ENCODE measurements at regions of chr14 and their contacts with region 1.

Region 1: DNA sequence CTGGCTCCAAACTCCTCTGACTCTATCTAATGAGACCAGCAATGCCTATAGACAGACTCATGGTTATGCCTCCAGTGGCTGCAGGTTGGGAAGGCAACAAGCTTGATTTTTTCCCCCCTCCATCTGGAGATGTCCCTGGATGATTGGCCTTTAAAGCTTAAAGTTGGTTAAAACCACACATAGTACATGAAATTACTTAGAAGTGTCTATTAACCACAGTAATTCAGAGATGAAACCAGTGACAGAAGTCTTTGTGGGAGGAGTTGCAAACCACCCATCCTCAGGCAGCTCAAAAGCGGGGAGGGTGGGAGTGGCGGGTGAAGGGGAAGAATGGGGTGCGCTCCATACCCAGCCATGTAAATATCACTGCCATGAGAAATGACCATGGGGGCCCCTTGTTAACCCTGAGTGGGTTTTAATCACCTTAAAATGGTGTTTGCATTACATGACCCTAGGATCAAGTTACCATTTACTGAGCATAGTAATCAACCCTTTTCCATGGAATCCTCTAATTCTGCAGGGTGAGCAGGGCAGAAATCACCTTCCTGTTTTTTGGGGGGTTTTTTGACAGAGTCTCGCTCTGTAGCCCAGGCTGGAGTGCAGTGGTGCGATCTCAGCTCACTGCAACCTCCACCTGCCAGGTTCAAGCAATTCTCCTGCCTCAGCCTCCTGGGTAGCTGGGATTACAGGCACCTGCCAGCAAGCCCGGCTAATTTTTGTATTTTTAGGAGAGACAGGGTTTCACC is 133.5 kb downstream of the FOXN3 start:
- DNase-seq: peak in 2 of 7 donors; percentile 2 to 33
- H3K4me3 ChIP-seq: no peak overlapping the region
- H3K27ac ChIP-seq: no peak overlapping the region
- H3K4me1 ChIP-seq: peaks cover 0 to 5% of the 10 kb centered on the region in 2 donors
- H3K27me3 ChIP-seq: no peaks in the 10 kb centered on the region
- CTCF ChIP-seq: no peak
- POLR2A ChIP-seq: no peak

Region 2: GRCh38 chr14:88919502-88919901 is 364.0 kb before region 1 on chr14:
- intact Hi-C with region 1: no loop called
- DNase-seq: no peak
- H3K4me3 ChIP-seq: no peak overlapping the region
- H3K27ac ChIP-seq: no peak overlapping the region
- H3K4me1 ChIP-seq: no peaks in the 10 kb centered on the region
- H3K27me3 ChIP-seq: no peaks in the 10 kb centered on the region
- CTCF ChIP-seq: no peak
- POLR2A ChIP-seq: no peak

Region 3: GRCh38 chr14:89270439-89271227 is 12.9 kb before region 1 on chr14:
- intact Hi-C with region 1: loop called in 1 of 2 experiments (anchors 2 kb)
- DNase-seq: peak in 1 of 7 donors; percentile 8
- H3K4me3 ChIP-seq: no peak overlapping the region
- H3K27ac ChIP-seq: peak overlapping the region in 2 of 5 donors; percentile 85 to 86
- H3K4me1 ChIP-seq: peaks cover 23 to 55% of the 10 kb centered on the region in 2 donors
- H3K27me3 ChIP-seq: no peaks in the 10 kb centered on the region
- CTCF ChIP-seq: no peak
- POLR2A ChIP-seq: no peak